B cell (primary cell): ENCODE measurements at regions of chr14 and their contacts with region 1.

Region 1: DNA sequence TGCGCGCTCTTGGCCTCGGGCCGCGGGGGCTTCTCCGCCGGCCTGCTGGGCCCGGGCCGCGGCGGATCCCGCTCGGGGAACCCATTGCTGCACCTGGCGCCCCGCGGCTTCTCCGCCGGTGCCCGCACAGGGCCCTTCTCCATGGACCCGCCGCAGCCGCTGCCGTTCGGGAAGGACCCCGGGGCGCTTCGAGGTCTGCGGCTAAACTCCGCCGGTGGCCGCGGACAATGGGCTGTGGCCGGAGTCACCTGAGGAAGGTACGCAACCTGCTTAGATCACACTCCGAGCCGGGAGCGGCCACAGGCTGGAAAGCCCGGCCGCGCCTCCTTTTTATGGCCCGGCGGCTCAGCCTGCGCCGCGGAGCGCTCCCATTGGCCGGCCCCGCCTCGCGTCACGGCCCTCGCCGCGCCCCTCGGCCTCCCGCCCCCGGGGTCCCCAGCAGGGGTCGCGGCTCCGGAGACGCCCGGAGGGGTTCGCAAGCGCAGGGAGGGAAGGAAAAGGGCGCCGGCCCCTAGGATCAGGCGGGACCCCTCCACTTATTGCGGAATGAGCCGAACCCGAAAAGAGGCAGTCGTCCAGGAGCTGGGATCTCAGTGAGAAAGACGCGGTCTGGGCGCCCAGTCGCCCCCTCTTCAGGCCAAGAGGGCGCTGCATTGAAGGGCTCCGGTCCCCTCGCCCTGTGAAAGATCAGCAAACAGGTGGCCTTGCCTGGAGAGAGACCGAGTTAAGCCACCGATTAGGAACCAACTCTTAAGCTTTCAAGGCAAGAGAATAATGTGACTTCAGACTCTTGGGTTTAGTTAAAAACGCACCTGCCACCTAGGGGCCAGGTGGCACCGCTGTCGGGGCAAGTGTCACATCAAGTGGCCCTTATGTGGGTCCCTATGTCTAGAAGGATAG is at the start of gene GCH1:
- DNase-seq: peak; percentile 92
- ATAC-seq: peak; percentile 87
- H3K4me3 ChIP-seq: peak within 1 kb of the TSS; percentile 50 to 92 (median 83)
- H3K4me3 Mint-ChIP-seq: peak within 1 kb of the TSS; percentile 91
- H3K27ac ChIP-seq: peak within 1 kb of the TSS; percentile 83 to 90
- H3K27ac Mint-ChIP-seq: peak within 1 kb of the TSS; percentile 92
- H3K4me1 ChIP-seq: peaks cover 9 to 16% of the 10 kb centered on the region in 2 donors
- H3K4me1 Mint-ChIP-seq: peaks cover 18% of the 10 kb centered on the region
- H3K27me3 ChIP-seq: no peaks in the 10 kb centered on the region
- H3K27me3 Mint-ChIP-seq: no peaks in the 10 kb centered on the region
- CTCF ChIP-seq: peak; percentile 85
- total RNA-seq, gene GCH1: 23.7 and 24.6 TPM in 2 replicates

Region 2: DNA sequence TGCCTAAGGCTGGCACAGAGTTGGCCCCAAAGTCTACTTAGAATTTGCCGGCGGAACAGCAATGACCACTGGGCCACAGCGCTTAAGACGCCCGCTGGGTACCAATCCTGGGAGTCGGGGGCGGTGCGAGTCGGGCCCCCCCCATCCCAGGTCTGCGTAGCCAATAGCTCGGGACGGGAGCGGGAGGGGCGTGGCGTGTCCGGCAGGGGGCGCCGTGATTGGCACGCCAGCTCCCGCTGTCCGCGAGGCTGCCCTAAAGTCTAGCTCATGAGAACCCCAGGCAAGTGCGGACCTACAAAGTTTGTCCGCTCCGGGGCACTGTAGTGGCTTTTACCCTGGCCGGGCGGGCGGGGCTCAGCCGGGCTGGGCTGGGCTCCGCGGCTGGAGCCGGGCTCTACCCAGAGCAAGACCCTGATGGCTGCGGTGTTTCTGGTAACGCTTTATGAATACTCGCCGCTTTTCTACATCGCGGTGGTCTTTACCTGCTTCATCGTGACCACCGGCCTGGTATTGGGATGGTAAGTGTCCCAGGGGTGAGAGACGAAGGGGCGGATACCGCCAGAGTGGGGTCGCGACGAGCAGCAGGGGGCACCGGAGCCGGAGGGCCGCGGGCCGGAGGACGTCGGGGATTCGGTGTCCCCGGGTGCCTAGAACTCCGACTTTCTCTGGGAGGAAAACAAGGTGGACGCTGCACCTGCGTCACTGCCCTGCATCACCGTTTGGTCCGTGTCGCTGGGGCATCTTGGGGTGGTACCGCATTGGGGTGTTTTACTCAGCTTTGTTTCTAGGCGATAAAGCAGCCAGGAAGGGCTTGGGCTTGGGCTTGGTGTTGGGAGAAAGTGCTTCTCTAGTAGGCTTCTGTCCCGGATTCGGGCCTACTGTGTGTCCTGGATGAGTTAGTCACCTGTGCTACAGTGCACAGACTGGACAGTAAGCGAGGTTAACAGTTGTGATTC is 392.9 kb before region 1 on chr14 and contains the start of gene CGRRF1:
- CTCF ChIA-PET with region 1: no interaction called
- POLR2A ChIA-PET with region 1: no interaction called
- intact Hi-C with region 1: loop called (anchors 1 kb)
- DNase-seq: peak; percentile 98
- ATAC-seq: peak; percentile 98
- H3K4me3 ChIP-seq: peak within 1 kb of the TSS; percentile 79 to 99 (median 96)
- H3K4me3 Mint-ChIP-seq: peak within 1 kb of the TSS; percentile 98
- H3K27ac ChIP-seq: peak within 1 kb of the TSS; percentile 81
- H3K27ac Mint-ChIP-seq: peak within 1 kb of the TSS; percentile 94
- H3K4me1 ChIP-seq: peaks cover 21 to 25% of the 10 kb centered on the region in 2 donors
- H3K4me1 Mint-ChIP-seq: peaks cover 44% of the 10 kb centered on the region
- H3K27me3 ChIP-seq: no peaks in the 10 kb centered on the region
- H3K27me3 Mint-ChIP-seq: no peaks in the 10 kb centered on the region
- CTCF ChIP-seq: peak; percentile 57
- total RNA-seq, gene CGRRF1: 15.8 and 17.9 TPM in 2 replicates

Region 3: DNA sequence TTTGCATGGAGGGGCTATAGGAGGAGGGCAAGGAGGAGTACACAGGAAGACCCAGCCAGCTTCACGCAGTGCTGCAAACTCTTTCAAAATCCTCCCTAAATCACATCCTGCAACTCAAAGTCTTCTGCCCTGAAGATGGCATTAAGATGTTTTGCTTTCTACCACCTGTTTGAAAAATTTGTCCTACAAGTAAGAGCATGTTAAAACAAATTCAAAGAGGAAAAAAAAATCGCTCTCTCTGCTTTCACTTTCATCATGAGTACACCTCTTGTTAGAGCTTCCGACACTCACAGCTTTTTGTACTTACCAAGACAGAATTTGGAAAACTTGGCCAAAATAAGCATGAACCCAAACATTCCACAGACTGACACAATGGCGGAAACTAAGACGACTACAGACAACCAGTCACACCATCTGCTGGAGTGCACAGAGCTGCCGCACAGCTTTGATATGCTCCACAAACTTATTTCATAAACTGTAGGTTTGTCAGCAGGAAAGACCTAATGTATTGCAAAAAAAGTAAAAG is 21.5 kb before region 1 on chr14:
- CTCF ChIA-PET with region 1: interaction called, 40 read pairs
- POLR2A ChIA-PET with region 1: interaction called, 5 read pairs
- intact Hi-C with region 1: loop called (anchors 1 kb)
- DNase-seq: peak; percentile 67
- ATAC-seq: peak; percentile 59
- H3K4me3 ChIP-seq: peak overlapping the region; percentile 27 to 76 (median 55)
- H3K4me3 Mint-ChIP-seq: peak overlapping the region; percentile 93
- H3K27ac ChIP-seq: peak overlapping the region; percentile 72 to 89
- H3K27ac Mint-ChIP-seq: peak overlapping the region; percentile 92
- H3K4me1 ChIP-seq: peaks cover 7 to 10% of the 10 kb centered on the region in 2 donors
- H3K4me1 Mint-ChIP-seq: peaks cover 35% of the 10 kb centered on the region
- H3K27me3 ChIP-seq: no peaks in the 10 kb centered on the region
- H3K27me3 Mint-ChIP-seq: no peaks in the 10 kb centered on the region
- CTCF ChIP-seq: no peak

Region 4: GRCh38 chr14:54981698-54982097 is 78.9 kb after region 1 on chr14:
- CTCF ChIA-PET with region 1: no interaction called
- POLR2A ChIA-PET with region 1: no interaction called
- intact Hi-C with region 1: loop called (anchors 5 kb)
- DNase-seq: no peak
- ATAC-seq: no peak
- H3K4me3 ChIP-seq: no peak overlapping the region
- H3K4me3 Mint-ChIP-seq: no peak overlapping the region
- H3K27ac ChIP-seq: no peak overlapping the region
- H3K27ac Mint-ChIP-seq: no peak overlapping the region
- H3K4me1 ChIP-seq: no peaks in the 10 kb centered on the region
- H3K4me1 Mint-ChIP-seq: no peaks in the 10 kb centered on the region
- H3K27me3 ChIP-seq: no peaks in the 10 kb centered on the region
- H3K27me3 Mint-ChIP-seq: no peaks in the 10 kb centered on the region
- CTCF ChIP-seq: peak; percentile 68

Region 5: DNA sequence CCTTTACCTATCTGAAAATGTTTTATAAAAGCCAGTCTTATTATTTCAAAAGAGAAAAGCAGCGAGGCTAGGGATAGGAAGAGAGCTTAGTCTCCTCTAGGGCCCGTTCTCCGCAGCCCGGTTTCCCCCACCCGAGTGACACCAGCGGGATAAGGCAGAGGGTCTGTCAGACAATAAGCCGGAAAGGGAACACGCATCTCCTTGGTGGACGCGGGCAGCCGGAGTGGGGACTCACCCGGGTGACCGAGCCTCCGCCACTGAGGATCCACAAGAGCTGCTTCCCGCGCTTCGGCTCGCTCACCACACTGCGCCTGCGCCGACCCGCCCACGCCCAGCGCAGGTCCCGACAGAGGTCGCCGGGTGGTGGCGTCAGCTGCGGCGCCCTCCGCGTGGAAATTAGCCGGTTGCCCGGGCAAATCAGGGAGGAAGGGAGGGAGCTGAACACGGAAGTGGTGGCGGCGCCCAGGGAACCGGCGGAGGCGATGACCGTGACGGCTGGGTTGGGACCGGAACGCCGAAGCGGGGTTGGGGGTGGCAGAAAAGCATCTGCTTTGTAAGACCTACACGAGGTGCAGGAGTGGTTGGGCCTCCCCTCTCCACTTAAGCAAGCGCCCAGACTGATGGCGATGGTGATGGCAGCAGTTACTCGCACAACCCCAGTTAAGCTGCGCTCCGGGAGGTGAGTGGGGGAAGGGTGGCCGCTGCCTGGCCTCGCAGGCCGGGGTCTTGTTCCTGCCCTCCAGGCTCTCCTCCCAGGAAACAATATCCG is 124.2 kb after region 1 on chr14 and contains the starts of genes SOCS4 and WDHD1:
- CTCF ChIA-PET with region 1: no interaction called
- POLR2A ChIA-PET with region 1: interaction called, 3 read pairs
- intact Hi-C with region 1: loop called (anchors 1 kb)
- DNase-seq: peak; percentile 97
- ATAC-seq: peak; percentile 93
- H3K4me3 ChIP-seq: peak within 1 kb of the TSS; percentile 62 to 95 (median 90)
- H3K4me3 Mint-ChIP-seq: peak within 1 kb of the TSS; percentile 94
- H3K27ac ChIP-seq: peak within 1 kb of the TSS; percentile 78 to 90
- H3K27ac Mint-ChIP-seq: peak within 1 kb of the TSS; percentile 91
- H3K4me1 ChIP-seq: peaks cover 18 to 30% of the 10 kb centered on the region in 2 donors
- H3K4me1 Mint-ChIP-seq: peaks cover 47% of the 10 kb centered on the region
- H3K27me3 ChIP-seq: no peaks in the 10 kb centered on the region
- H3K27me3 Mint-ChIP-seq: no peaks in the 10 kb centered on the region
- CTCF ChIP-seq: no peak
- total RNA-seq, gene SOCS4: 23.6 and 26.3 TPM in 2 replicates
- total RNA-seq, gene WDHD1: 6.2 and 6.5 TPM in 2 replicates

Region 6: DNA sequence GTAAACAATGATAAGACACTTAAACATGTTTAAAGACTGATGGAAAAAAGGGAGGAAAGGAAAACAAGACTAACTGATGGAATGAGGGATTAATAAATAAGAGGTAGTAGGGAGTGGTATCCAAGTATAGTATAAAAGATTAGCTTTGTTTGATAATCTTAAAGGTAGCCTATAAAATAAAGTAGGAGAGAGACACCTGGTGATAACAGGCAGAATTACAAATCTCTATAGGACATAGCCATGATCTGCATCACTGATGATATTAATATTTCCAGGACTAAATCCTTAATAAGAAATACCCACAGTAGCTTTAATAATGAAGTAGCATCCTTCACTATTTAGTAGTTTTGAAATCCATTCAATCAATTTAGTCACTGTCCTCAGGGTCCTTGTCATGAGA is 258.2 kb after region 1 on chr14:
- CTCF ChIA-PET with region 1: interaction called, 4 read pairs
- POLR2A ChIA-PET with region 1: no interaction called
- intact Hi-C with region 1: loop called (anchors 2 kb)
- DNase-seq: peak; percentile 60
- ATAC-seq: peak; percentile 85
- H3K4me3 ChIP-seq: no peak overlapping the region
- H3K4me3 Mint-ChIP-seq: no peak overlapping the region
- H3K27ac ChIP-seq: no peak overlapping the region
- H3K27ac Mint-ChIP-seq: no peak overlapping the region
- H3K4me1 ChIP-seq: no peaks in the 10 kb centered on the region
- H3K4me1 Mint-ChIP-seq: peaks cover 2% of the 10 kb centered on the region
- H3K27me3 ChIP-seq: no peaks in the 10 kb centered on the region
- H3K27me3 Mint-ChIP-seq: no peaks in the 10 kb centered on the region
- CTCF ChIP-seq: peak; percentile 74

Region 7: GRCh38 chr14:55411426-55412389 is 508.9 kb after region 1 on chr14 and contains the start of gene ATG14:
- CTCF ChIA-PET with region 1: no interaction called
- POLR2A ChIA-PET with region 1: no interaction called
- intact Hi-C with region 1: loop called (anchors 2 kb)
- DNase-seq: peak; percentile 81
- ATAC-seq: peak; percentile 99
- H3K4me3 ChIP-seq: peak within 1 kb of the TSS; percentile 62 to 95 (median 93)
- H3K4me3 Mint-ChIP-seq: peak within 1 kb of the TSS; percentile 93
- H3K27ac ChIP-seq: peak within 1 kb of the TSS; percentile 49 to 87
- H3K27ac Mint-ChIP-seq: peak within 1 kb of the TSS; percentile 87
- H3K4me1 ChIP-seq: peaks cover 16 to 17% of the 10 kb centered on the region in 2 donors
- H3K4me1 Mint-ChIP-seq: peaks cover 35% of the 10 kb centered on the region
- H3K27me3 ChIP-seq: no peaks in the 10 kb centered on the region
- H3K27me3 Mint-ChIP-seq: peaks cover 19% of the 10 kb centered on the region
- CTCF ChIP-seq: no peak
- total RNA-seq, gene ATG14: 15.5 and 17.0 TPM in 2 replicates